IMR-90 (cell line): ENCODE measurements at regions of chr16 and their contacts with region 1.

Region 1: DNA sequence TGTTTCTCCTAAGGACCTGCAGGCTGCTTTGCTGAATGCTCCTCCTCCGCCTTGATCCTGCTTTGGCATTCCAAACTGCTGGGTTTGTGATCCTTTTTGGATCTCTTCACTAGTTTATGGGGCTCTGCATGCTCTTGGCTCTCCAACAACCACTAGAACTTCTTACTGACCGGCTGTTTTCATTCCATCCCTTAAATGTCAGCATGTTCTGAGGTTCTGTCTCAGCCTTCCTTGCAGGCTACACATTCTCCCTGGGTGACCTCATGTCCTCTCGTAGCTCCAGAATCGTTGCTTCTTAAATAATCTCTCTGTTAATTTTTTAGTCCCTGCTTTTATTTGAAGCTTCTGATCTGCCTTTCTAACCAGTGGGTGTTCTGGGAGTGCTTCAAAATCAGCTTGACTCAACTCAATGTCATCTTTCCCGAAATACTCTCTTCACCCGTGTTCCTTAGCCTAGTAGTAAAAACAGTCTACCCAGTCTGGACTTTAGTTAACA is 119.0 kb upstream of the HS3ST2 start:
- DNase-seq: peak; percentile 90
- ATAC-seq: peak; percentile 97
- H3K4me3 ChIP-seq: no peak overlapping the region
- H3K27ac ChIP-seq: no peak overlapping the region; the same call in 1 of the 2 replicates
- H3K4me1 ChIP-seq: no peaks in the 10 kb centered on the region
- H3K27me3 ChIP-seq: no peaks in the 10 kb centered on the region; the same call in 1 of the 2 replicates
- CTCF ChIP-seq: no peak
- POLR2A ChIP-seq: no peak
- RAD21 ChIP-seq: no peak

Region 2: DNA sequence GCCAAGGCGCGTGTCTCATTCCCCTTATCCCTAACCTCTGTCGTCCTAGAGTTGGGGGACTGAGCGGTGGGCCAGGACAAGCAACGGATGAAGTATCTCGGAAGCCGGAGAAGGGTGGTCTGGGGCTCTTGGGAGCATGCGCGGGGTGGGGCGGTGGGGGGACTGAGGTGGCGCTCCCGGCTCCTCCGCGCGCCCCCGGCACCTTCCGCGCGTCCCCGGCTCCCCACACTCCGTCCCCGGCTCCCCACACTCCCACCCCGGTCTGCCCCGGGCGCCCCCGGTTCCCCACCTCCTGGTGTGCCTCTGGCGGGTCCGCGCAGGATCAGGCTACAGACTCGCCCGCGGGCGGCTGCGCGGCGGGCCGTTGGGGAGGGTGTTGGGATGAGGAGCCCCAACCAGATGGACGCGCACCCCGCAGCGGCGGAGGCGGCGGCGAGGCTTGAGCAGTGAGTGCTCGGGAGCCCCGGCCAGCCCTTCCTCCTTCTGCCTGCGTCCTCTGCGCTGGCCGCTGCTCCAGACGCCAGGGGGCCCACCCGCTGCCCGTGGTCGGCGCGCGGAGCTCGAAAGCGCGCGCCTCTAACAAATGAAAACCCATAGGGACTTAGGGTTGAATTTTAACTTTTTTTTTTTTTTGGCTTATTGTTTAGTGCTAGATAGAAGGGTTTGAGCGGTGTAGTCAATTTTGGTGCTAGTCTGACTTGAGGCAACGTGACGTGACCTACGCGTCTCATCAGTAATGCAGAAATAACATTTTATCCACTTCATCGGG is 1411.2 kb before region 1 on chr16:
- CTCF ChIA-PET with region 1: no interaction called
- POLR2A ChIA-PET with region 1: no interaction called
- dilution Hi-C with region 1: no loop called
- in situ Hi-C with region 1: no loop called
- intact Hi-C with region 1: loop called (anchors 10 kb)
- DNase-seq: peak; percentile 25
- ATAC-seq: peak; percentile 98
- H3K4me3 ChIP-seq: peak overlapping the region; percentile 29
- H3K27ac ChIP-seq: no peak overlapping the region
- H3K4me1 ChIP-seq: no peaks in the 10 kb centered on the region
- H3K27me3 ChIP-seq: peaks cover 49% of the 10 kb centered on the region
- CTCF ChIP-seq: peak; percentile 39
- POLR2A ChIP-seq: no peak
- RAD21 ChIP-seq: peak; percentile 19; the same call in 1 of the 2 replicates

Region 3: GRCh38 chr16:21574381-21574780 is 1120.6 kb before region 1 on chr16:
- CTCF ChIA-PET with region 1: no interaction called
- POLR2A ChIA-PET with region 1: no interaction called
- dilution Hi-C with region 1: no loop called
- in situ Hi-C with region 1: no loop called
- intact Hi-C with region 1: loop called (anchors 1 kb)
- DNase-seq: no peak
- ATAC-seq: no peak
- H3K4me3 ChIP-seq: no peak overlapping the region
- H3K27ac ChIP-seq: no peak overlapping the region
- H3K4me1 ChIP-seq: no peaks in the 10 kb centered on the region
- H3K27me3 ChIP-seq: peaks cover 10% of the 10 kb centered on the region
- CTCF ChIP-seq: no peak
- POLR2A ChIP-seq: no peak
- RAD21 ChIP-seq: no peak

Region 4: DNA sequence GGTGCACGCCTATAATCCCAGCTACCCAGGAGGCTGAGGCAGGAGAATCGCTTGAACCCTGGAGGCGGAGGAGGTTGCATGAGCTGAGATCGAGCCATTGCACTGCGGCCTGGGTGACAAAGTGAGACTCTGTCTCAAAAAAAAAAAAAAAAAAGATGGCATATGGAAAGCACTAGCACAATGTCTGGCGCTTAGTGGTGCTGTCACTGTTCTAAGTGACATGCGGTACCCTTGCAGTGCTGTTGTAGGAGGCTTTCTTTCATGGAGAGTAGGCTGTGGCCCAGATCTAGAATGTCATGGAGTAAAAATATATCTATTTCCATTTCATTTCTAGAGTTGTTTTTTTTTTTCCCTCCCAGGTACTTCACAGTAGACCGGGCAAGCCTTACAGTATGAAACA is 1110.1 kb before region 1 on chr16:
- CTCF ChIA-PET with region 1: interaction called, 4 read pairs
- POLR2A ChIA-PET with region 1: no interaction called
- dilution Hi-C with region 1: no loop called
- in situ Hi-C with region 1: loop called (anchors 5 kb)
- intact Hi-C with region 1: no loop called
- DNase-seq: no peak
- ATAC-seq: no peak
- H3K4me3 ChIP-seq: no peak overlapping the region
- H3K27ac ChIP-seq: no peak overlapping the region
- H3K4me1 ChIP-seq: no peaks in the 10 kb centered on the region
- H3K27me3 ChIP-seq: peaks cover 2% of the 10 kb centered on the region; the same call in 1 of the 2 replicates
- CTCF ChIP-seq: no peak
- POLR2A ChIP-seq: no peak
- RAD21 ChIP-seq: no peak

Region 5: DNA sequence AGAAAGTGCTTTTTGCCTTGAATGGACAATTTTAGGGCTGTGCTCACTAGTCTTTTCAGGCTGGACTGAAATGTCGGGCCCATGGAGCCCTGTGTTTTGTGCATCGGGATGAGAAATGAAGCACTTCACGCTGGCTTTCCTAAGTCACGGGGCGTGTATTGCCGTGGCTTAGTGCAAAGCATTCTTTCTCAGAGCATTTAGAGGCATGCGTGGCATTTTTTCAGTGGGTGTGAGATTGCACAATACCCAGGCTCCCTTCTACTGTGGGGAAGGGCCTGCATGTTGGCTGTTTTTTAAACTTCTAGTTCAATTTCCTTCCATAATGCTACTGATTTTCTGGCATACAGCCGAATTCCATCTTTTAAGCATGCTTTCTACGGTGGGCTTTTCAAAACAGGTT is 410.3 kb before region 1 on chr16:
- CTCF ChIA-PET with region 1: no interaction called
- POLR2A ChIA-PET with region 1: no interaction called
- dilution Hi-C with region 1: no loop called
- in situ Hi-C with region 1: no loop called
- intact Hi-C with region 1: no loop called
- DNase-seq: peak; percentile 58
- ATAC-seq: peak; percentile 80
- H3K4me3 ChIP-seq: no peak overlapping the region
- H3K27ac ChIP-seq: no peak overlapping the region
- H3K4me1 ChIP-seq: peaks cover 3% of the 10 kb centered on the region; the same call in 1 of the 2 replicates
- H3K27me3 ChIP-seq: no peaks in the 10 kb centered on the region
- CTCF ChIP-seq: no peak
- POLR2A ChIP-seq: no peak
- RAD21 ChIP-seq: no peak

Region 6: GRCh38 chr16:22646948-22647556 is 47.9 kb before region 1 on chr16:
- CTCF ChIA-PET with region 1: no interaction called
- POLR2A ChIA-PET with region 1: no interaction called
- dilution Hi-C with region 1: no loop called
- in situ Hi-C with region 1: loop called (anchors 5 kb)
- intact Hi-C with region 1: no loop called
- DNase-seq: no peak
- ATAC-seq: no peak
- H3K4me3 ChIP-seq: no peak overlapping the region
- H3K27ac ChIP-seq: no peak overlapping the region
- H3K4me1 ChIP-seq: no peaks in the 10 kb centered on the region
- H3K27me3 ChIP-seq: peaks cover 23% of the 10 kb centered on the region
- CTCF ChIP-seq: no peak
- POLR2A ChIP-seq: no peak
- RAD21 ChIP-seq: no peak

Region 7: GRCh38 chr16:22705799-22706198 is 10.9 kb after region 1 on chr16:
- CTCF ChIA-PET with region 1: no interaction called
- POLR2A ChIA-PET with region 1: no interaction called
- dilution Hi-C with region 1: no loop called
- in situ Hi-C with region 1: no loop called
- intact Hi-C with region 1: no loop called
- DNase-seq: no peak
- ATAC-seq: no peak
- H3K4me3 ChIP-seq: no peak overlapping the region
- H3K27ac ChIP-seq: no peak overlapping the region
- H3K4me1 ChIP-seq: no peaks in the 10 kb centered on the region
- H3K27me3 ChIP-seq: no peaks in the 10 kb centered on the region
- CTCF ChIP-seq: no peak
- POLR2A ChIP-seq: no peak
- RAD21 ChIP-seq: no peak

Region 8: GRCh38 chr16:22753451-22753850 is 58.5 kb after region 1 on chr16:
- CTCF ChIA-PET with region 1: no interaction called
- POLR2A ChIA-PET with region 1: no interaction called
- dilution Hi-C with region 1: no loop called
- in situ Hi-C with region 1: no loop called
- intact Hi-C with region 1: no loop called
- DNase-seq: no peak
- ATAC-seq: no peak
- H3K4me3 ChIP-seq: no peak overlapping the region
- H3K27ac ChIP-seq: no peak overlapping the region
- H3K4me1 ChIP-seq: no peaks in the 10 kb centered on the region
- H3K27me3 ChIP-seq: no peaks in the 10 kb centered on the region
- CTCF ChIP-seq: no peak
- POLR2A ChIP-seq: no peak
- RAD21 ChIP-seq: no peak